ENCODE measurements at regions of chr14 and their contacts with region 1.

Region 1: DNA sequence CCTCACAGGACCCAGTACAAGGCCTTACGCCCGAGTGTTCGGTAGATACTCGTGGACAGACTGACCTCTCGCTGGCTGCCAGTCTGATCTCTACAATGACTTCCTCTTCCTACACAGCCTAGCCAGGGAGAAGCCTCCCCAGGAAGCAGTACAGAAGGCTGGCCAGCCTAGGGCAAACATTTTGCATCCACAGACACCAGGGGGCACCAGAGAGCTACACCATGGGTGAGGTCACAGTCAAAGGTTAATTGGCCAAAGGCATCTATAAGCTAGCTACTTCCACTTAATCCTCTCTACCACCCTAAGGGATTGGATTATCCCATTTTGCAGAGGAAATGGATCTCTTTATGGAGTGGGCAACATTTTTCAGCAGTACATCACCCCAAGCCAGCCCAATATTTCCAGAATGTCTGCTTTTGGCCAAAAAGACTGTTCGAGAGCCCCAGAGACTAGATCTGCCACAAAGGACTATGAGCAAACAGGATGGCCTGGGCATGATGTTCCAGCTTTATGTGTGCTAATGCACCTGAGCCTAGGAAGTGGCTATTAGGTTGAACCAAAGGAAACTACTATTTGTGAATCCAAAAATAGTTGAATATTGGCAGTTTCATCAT is 14.6 kb upstream of the PNMA1 start:
- DNase-seq: peak; percentile 86
- H3K4me3 Mint-ChIP-seq: no peak overlapping the region
- H3K27ac Mint-ChIP-seq: peak overlapping the region; percentile 71
- H3K4me1 Mint-ChIP-seq: peaks cover 33% of the 10 kb centered on the region
- H3K27me3 Mint-ChIP-seq: no peaks in the 10 kb centered on the region
- CTCF ChIP-seq: peak; percentile 91

Region 2: GRCh38 chr14:73713803-73714655 is 14.8 kb before region 1 on chr14 and contains the start of gene PNMA1:
- CTCF ChIA-PET with region 1: interaction called, 6 read pairs
- POLR2A ChIA-PET with region 1: interaction called, 44 read pairs
- intact Hi-C with region 1: loop called (anchors 1 kb)
- DNase-seq: peak; percentile 79
- H3K4me3 Mint-ChIP-seq: peak within 1 kb of the TSS; percentile 86
- H3K27ac Mint-ChIP-seq: peak within 1 kb of the TSS; percentile 86
- H3K4me1 Mint-ChIP-seq: peaks cover 31% of the 10 kb centered on the region
- H3K27me3 Mint-ChIP-seq: no peaks in the 10 kb centered on the region
- CTCF ChIP-seq: no peak
- total RNA-seq, gene PNMA1: 43.3 and 46.3 TPM in 2 replicates

Region 3: DNA sequence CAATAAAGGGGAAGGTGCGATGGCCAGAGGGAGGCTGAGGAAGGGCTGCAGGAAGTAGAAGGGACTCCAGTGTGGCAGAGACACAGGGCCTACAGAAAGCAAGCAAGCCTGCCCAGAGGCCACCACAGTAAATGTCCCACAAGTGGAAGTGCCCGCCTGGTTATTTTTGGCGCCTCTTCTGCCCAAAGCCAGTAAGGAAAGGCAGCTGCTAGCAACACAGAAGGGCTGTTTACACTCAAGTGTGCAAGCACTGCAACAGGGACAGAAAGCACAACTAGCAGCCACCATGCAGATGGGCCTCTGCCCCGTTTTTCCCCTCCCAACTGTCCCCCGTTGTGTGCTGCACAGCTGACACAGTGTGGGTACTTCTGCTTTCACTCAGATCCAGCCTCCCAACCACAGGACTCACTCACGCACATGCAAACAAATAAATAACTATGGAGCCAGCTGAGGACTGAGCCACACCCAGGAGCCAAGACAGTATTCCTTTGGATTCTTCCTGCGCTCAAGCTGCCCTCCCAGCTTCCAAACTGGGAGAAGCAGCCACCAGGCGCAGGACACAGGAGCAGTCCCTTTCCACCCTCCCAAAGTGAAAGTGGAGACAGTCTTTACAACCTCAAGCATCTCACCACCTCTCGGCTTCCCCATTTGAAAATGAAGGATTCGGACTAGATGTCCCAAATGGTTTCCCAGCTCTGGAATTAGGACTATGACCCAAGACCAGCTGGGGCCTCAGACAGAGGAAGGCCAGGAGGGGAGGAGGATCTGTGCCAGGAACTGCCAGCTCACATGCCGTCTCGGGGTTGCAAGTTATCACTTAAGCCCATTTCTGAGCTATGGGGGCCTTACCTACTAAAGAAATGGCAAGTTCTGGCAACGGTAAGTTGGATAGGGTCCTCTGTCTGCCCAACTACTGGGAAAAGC is 25.4 kb after region 1 on chr14:
- CTCF ChIA-PET with region 1: interaction called, 58 read pairs
- POLR2A ChIA-PET with region 1: interaction called, 189 read pairs
- intact Hi-C with region 1: loop called (anchors 1 kb)
- DNase-seq: peak; percentile 48
- H3K4me3 Mint-ChIP-seq: peak overlapping the region; percentile 86
- H3K27ac Mint-ChIP-seq: peak overlapping the region; percentile 89
- H3K4me1 Mint-ChIP-seq: peaks cover 71% of the 10 kb centered on the region
- H3K27me3 Mint-ChIP-seq: no peaks in the 10 kb centered on the region
- CTCF ChIP-seq: no peak

Region 4: DNA sequence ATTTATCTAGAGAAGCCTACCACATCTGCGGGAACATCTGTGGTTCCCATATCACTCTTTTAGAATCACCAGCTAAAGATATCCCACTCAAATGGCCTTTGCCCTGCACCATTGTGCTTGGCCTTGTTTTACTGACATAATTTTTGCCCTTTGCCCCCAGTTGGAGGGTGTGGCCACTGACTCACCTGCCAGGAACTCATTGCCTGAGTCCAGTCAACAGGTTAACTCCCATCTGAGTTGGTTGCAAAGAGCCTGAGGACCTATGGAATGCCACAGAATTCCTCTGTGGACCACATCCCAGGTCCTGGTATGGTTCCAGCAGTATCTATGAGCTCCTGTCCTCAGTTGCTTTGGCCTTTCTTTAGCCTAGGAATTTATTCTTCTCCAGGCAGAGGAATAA is 67.1 kb after region 1 on chr14:
- CTCF ChIA-PET with region 1: interaction called, 9 read pairs
- POLR2A ChIA-PET with region 1: interaction called, 13 read pairs
- intact Hi-C with region 1: no loop called
- DNase-seq: peak; percentile 80
- H3K4me3 Mint-ChIP-seq: no peak overlapping the region
- H3K27ac Mint-ChIP-seq: peak overlapping the region; percentile 64
- H3K4me1 Mint-ChIP-seq: peaks cover 21% of the 10 kb centered on the region
- H3K27me3 Mint-ChIP-seq: no peaks in the 10 kb centered on the region
- CTCF ChIP-seq: no peak

Region 5: GRCh38 chr14:73886449-73887317 is 157.9 kb after region 1 on chr14 and contains the start of gene ZNF410:
- CTCF ChIA-PET with region 1: no interaction called
- POLR2A ChIA-PET with region 1: interaction called, 13 read pairs
- intact Hi-C with region 1: loop called (anchors 5 kb)
- DNase-seq: peak; percentile 97
- H3K4me3 Mint-ChIP-seq: peak within 1 kb of the TSS; percentile 82
- H3K27ac Mint-ChIP-seq: peak within 1 kb of the TSS; percentile 93
- H3K4me1 Mint-ChIP-seq: peaks cover 30% of the 10 kb centered on the region
- H3K27me3 Mint-ChIP-seq: no peaks in the 10 kb centered on the region
- CTCF ChIP-seq: no peak
- total RNA-seq, gene ZNF410: 74.0 and 76.0 TPM in 2 replicates

Measured in MCF 10A (cell line).